ENCODE measurements at regions of chr5 and their contacts with region 1.

Region 1: GRCh38 chr5:69467442-69468225 is 25.0 kb upstream of the OCLN start:
- DNase-seq: peak; percentile 90
- ATAC-seq: peak; percentile 96
- H3K4me3 ChIP-seq: peak overlapping the region; percentile 44; the same call in 1 of the 2 replicates
- H3K27ac ChIP-seq: peak overlapping the region; percentile 94
- H3K4me1 ChIP-seq: peaks cover 26% of the 10 kb centered on the region
- H3K27me3 ChIP-seq: no peaks in the 10 kb centered on the region
- CTCF ChIP-seq: no peak
- EP300 ChIP-seq: peak; percentile 47 to 81
- POLR2A ChIP-seq: 0 out of 2 replicates have a peak, but pooled peaks have one; percentile 24
- RAD21 ChIP-seq: no peak

Region 2: GRCh38 chr5:69374911-69375446 is 92.7 kb before region 1 on chr5:
- CTCF ChIA-PET with region 1: no interaction called
- POLR2A ChIA-PET with region 1: interaction called, 3 read pairs
- RAD21 ChIA-PET with region 1: interaction called, 7 read pairs
- SMC1A ChIA-PET with region 1: interaction called, 10 read pairs
- in situ Hi-C with region 1: no loop called
- intact Hi-C with region 1: no loop called
- DNase-seq: peak; percentile 54
- ATAC-seq: peak; percentile 76
- H3K4me3 ChIP-seq: peak overlapping the region; percentile 76
- H3K27ac ChIP-seq: peak overlapping the region; percentile 92
- H3K4me1 ChIP-seq: peaks cover 12% of the 10 kb centered on the region
- H3K27me3 ChIP-seq: no peaks in the 10 kb centered on the region
- CTCF ChIP-seq: no peak
- EP300 ChIP-seq: peak in 1 of 2 experiments; percentile 69; a peak in 2 of 4 replicates
- POLR2A ChIP-seq: 0 out of 2 replicates have a peak, but pooled peaks have one; percentile 31
- RAD21 ChIP-seq: no peak

Region 3: GRCh38 chr5:69432412-69433206 is 35.0 kb before region 1 on chr5:
- CTCF ChIA-PET with region 1: interaction called, 4 read pairs
- POLR2A ChIA-PET with region 1: interaction called, 8 read pairs
- RAD21 ChIA-PET with region 1: interaction called, 16 read pairs
- SMC1A ChIA-PET with region 1: interaction called, 13 read pairs
- in situ Hi-C with region 1: no loop called
- intact Hi-C with region 1: loop called (anchors 1 kb)
- DNase-seq: peak; percentile 64
- ATAC-seq: peak; percentile 90
- H3K4me3 ChIP-seq: peak overlapping the region; percentile 31
- H3K27ac ChIP-seq: peak overlapping the region; percentile 76
- H3K4me1 ChIP-seq: peaks cover 9% of the 10 kb centered on the region; the same call in 1 of the 2 replicates
- H3K27me3 ChIP-seq: no peaks in the 10 kb centered on the region
- CTCF ChIP-seq: no peak
- EP300 ChIP-seq: peak in 1 of 2 experiments; percentile 68; a peak in 2 of 4 replicates
- POLR2A ChIP-seq: no peak
- RAD21 ChIP-seq: peak; percentile 30; the same call in 1 of the 2 replicates

Region 4: GRCh38 chr5:69444127-69444754 is 23.4 kb before region 1 on chr5:
- CTCF ChIA-PET with region 1: no interaction called
- POLR2A ChIA-PET with region 1: no interaction called
- RAD21 ChIA-PET with region 1: no interaction called
- SMC1A ChIA-PET with region 1: interaction called, 10 read pairs
- in situ Hi-C with region 1: no loop called
- intact Hi-C with region 1: no loop called
- DNase-seq: no peak
- ATAC-seq: no peak
- H3K4me3 ChIP-seq: no peak overlapping the region
- H3K27ac ChIP-seq: no peak overlapping the region
- H3K4me1 ChIP-seq: no peaks in the 10 kb centered on the region
- H3K27me3 ChIP-seq: no peaks in the 10 kb centered on the region
- CTCF ChIP-seq: no peak
- EP300 ChIP-seq: no peak
- POLR2A ChIP-seq: no peak
- RAD21 ChIP-seq: no peak